ENCODE measurements at regions of chr5 and their contacts with region 1.

Region 1: DNA sequence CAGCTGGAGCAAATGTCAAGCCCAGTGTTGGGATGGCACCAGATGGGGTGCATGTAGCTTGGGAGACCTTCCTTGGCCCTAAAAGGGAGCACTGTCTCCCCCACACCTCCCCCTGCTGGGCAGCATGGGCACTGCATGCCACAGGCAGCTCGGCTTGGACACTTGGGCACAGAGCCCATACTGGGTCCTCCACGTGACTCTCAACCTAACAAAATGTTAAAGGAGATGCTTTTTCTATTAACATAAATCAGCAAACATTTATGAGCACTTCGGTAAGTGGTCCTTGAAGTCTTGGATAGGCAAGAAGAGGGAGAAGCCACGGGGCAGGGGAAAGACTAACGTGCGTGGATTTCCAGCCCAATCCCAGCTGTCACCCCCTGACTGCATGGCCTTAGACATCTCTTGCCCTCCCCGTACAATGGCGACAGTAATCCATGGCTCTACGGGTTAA is 23.9 kb upstream of the MAPK9 start:
- DNase-seq: peak; percentile 71
- H3K4me3 Mint-ChIP-seq: no peak overlapping the region
- H3K27ac Mint-ChIP-seq: no peak overlapping the region
- H3K4me1 Mint-ChIP-seq: peaks cover 9% of the 10 kb centered on the region
- H3K27me3 Mint-ChIP-seq: peaks cover 3% of the 10 kb centered on the region

Region 2: DNA sequence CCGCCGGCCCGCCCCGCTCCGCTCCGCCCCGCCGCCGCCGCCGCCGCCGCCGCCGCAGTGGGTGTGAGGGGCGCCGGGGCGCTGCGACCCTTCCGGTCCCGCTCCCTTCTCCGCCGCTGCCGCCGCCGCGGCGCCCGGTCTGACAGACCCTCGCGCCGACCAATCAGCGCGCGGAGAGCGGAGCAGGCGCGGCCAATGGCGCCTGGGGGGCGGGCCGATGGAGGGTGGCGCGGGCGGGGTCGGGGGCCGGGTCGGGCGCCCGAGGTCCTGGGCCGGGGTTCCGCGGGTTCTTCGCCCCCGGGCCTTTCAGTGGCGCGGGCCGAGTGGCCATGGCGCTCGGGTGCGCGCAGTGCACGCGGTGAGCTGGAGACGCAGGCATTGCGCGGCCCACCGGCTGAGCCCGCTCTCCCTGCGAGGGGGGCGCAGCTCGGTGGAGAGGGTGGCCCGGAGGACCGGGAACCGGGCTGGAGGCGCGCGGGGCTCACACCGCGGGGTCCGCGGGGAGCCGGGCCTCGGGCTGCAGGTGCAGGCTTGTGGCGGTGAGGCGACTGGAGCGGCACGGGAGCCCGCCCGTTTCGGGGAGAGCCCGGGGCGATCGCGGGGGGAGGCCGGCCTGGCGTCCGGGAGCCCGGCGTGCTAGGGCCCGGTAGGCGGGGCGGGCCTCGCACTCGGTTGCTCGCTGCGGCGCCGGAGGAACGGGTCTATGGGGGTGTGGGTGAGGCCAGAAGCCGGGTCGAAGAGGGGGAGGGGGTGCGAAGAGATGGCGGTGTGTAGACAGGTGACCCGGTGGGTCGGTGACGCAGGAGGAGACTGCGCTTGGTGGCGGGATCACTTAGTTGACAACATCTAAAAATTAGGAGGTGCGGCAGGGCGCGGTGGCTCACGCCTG is 23.6 kb before region 1 on chr5 and contains the start of gene MAPK9:
- CTCF ChIA-PET with region 1: interaction called, 53 read pairs
- POLR2A ChIA-PET with region 1: interaction called, 7 read pairs
- DNase-seq: peak; percentile 87
- H3K4me3 Mint-ChIP-seq: peak within 1 kb of the TSS; percentile 96
- H3K27ac Mint-ChIP-seq: peak within 1 kb of the TSS; percentile 96
- H3K4me1 Mint-ChIP-seq: peaks cover 25% of the 10 kb centered on the region
- H3K27me3 Mint-ChIP-seq: no peaks in the 10 kb centered on the region
- total RNA-seq, gene MAPK9: 42.5 to 44.4 TPM